T-cell (primary cell): ENCODE measurements at regions of chr3 and their contacts with region 1.

Region 1: DNA sequence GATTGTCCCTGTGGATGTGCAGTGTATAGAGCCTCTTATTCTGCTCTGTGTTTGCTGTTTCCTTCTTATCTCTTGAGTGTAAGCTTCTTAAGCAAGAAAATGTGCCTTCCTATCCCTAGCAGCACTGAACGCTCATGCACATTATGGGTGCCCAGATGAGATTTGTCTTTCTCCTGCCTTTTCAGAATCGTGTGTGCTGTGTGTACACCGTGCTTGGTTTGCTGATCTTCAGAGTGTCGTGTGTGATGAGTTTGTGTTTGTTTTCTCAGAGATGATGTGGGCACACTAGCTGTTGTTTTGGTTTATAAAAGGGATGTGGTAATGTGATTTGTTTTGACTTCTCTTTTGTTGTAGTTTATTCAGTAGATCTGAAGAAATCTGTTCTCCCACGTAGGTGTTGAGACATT is 19.7 kb downstream of the GPR171 start:
- DNase-seq: peak in 10 of 35 experiments; percentile 5 to 50 (median 16)
- ATAC-seq: peak; percentile 71 to 88 (median 86)
- H3K4me3 ChIP-seq: no peak overlapping the region
- H3K4me3 Mint-ChIP-seq: peak overlapping the region; percentile 58 to 68 (median 62)
- H3K27ac ChIP-seq: peak overlapping the region; percentile 33
- H3K27ac Mint-ChIP-seq: peak overlapping the region; percentile 85 to 91
- H3K4me1 ChIP-seq: peaks cover 5 to 12% of the 10 kb centered on the region in 2 experiments
- H3K4me1 Mint-ChIP-seq: peaks cover 31 to 44% (median 33%) of the 10 kb centered on the region in 3 donors
- H3K27me3 ChIP-seq: no peaks in the 10 kb centered on the region
- H3K27me3 Mint-ChIP-seq: no peaks in the 10 kb centered on the region

Region 2: GRCh38 chr3:150970665-150971324 is 212.5 kb before region 1 on chr3:
- CTCF ChIA-PET with region 1: no interaction called
- POLR2A ChIA-PET with region 1: no interaction called
- DNase-seq: no peak
- ATAC-seq: no peak
- H3K4me3 ChIP-seq: no peak overlapping the region
- H3K4me3 Mint-ChIP-seq: no peak overlapping the region
- H3K27ac ChIP-seq: no peak overlapping the region
- H3K27ac Mint-ChIP-seq: no peak overlapping the region
- H3K4me1 ChIP-seq: no peaks in the 10 kb centered on the region
- H3K4me1 Mint-ChIP-seq: no peaks in the 10 kb centered on the region
- H3K27me3 ChIP-seq: peaks cover 0 to 5% of the 10 kb centered on the region in 2 experiments
- H3K27me3 Mint-ChIP-seq: peaks cover 4 to 5% of the 10 kb centered on the region in 2 donors

Region 3: DNA sequence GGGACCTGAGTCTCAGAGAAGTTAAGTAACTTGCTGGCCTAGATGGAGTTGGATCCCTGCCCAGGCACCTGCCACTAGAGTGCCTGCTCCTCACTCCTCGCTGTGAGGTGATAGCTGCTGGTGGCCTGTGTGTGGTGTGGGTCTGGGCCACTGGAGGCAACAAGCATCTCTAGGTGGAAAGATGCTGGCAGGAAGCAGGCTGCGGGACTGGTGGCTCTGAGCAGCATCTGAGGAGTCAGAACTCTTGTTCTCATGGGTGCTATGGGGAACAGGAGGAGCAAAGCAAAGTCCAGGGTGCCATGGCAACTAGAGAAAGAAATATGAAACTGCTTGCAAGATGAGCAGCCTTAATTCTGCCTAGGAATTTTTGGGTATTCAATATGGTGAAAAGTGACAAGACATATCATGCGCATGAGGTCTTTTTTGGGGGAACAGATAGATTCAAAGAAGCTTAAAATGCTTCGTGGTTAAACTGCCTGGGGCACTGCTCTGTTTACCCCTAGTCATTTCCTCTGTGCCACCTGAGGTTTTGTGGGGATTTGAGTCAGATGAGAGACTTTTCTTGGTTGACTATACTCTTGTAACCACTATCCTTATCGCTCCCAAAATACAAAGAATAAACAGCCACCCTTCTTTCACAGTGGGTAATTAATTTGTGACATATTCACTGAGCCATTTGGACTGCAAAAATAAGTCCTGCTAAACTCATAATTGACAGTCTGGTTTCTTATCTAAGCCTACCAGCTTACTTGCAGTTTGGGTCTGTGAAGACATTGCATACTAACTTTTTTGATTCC is 47.5 kb before region 1 on chr3:
- CTCF ChIA-PET with region 1: no interaction called
- POLR2A ChIA-PET with region 1: interaction called in 1 of 2 experiments, 11 read pairs
- DNase-seq: peak in 33 of 35 experiments; percentile 2 to 48 (median 21)
- ATAC-seq: peak; percentile 87 to 93 (median 88)
- H3K4me3 ChIP-seq: no peak overlapping the region
- H3K4me3 Mint-ChIP-seq: peak overlapping the region; percentile 1 to 55 (median 21)
- H3K27ac ChIP-seq: peak overlapping the region; percentile 62
- H3K27ac Mint-ChIP-seq: peak overlapping the region; percentile 83 to 88
- H3K4me1 ChIP-seq: peaks cover 9 to 11% of the 10 kb centered on the region in 2 experiments
- H3K4me1 Mint-ChIP-seq: peaks cover 22 to 29% (median 27%) of the 10 kb centered on the region in 3 donors
- H3K27me3 ChIP-seq: no peaks in the 10 kb centered on the region
- H3K27me3 Mint-ChIP-seq: peaks cover 0 to 4% of the 10 kb centered on the region in 2 donors

Region 4: GRCh38 chr3:151210676-151211381 is 27.6 kb after region 1 on chr3:
- CTCF ChIA-PET with region 1: interaction called in 1 of 2 experiments, 13 read pairs
- POLR2A ChIA-PET with region 1: no interaction called
- DNase-seq: peak in 1 of 35 experiments; percentile 23
- ATAC-seq: peak; percentile 63 to 73 (median 65)
- H3K4me3 ChIP-seq: no peak overlapping the region
- H3K4me3 Mint-ChIP-seq: peak overlapping the region in 1 of 3 donors; percentile 40
- H3K27ac ChIP-seq: no peak overlapping the region
- H3K27ac Mint-ChIP-seq: peak overlapping the region; percentile 83 to 84
- H3K4me1 ChIP-seq: peaks cover 19 to 41% of the 10 kb centered on the region in 2 experiments
- H3K4me1 Mint-ChIP-seq: peaks cover 49 to 52% (median 50%) of the 10 kb centered on the region in 3 donors
- H3K27me3 ChIP-seq: no peaks in the 10 kb centered on the region
- H3K27me3 Mint-ChIP-seq: no peaks in the 10 kb centered on the region

Region 5: GRCh38 chr3:153043729-153044328 is 1860.6 kb after region 1 on chr3:
- CTCF ChIA-PET with region 1: interaction called in 1 of 2 experiments, 11 read pairs
- POLR2A ChIA-PET with region 1: no interaction called
- DNase-seq: no peak
- ATAC-seq: no peak
- H3K4me3 ChIP-seq: no peak overlapping the region
- H3K4me3 Mint-ChIP-seq: no peak overlapping the region
- H3K27ac ChIP-seq: no peak overlapping the region
- H3K27ac Mint-ChIP-seq: no peak overlapping the region
- H3K4me1 ChIP-seq: no peaks in the 10 kb centered on the region
- H3K4me1 Mint-ChIP-seq: peaks cover 0 to 5% (median 3%) of the 10 kb centered on the region in 3 donors
- H3K27me3 ChIP-seq: no peaks in the 10 kb centered on the region
- H3K27me3 Mint-ChIP-seq: peaks cover 0 to 3% of the 10 kb centered on the region in 2 donors